WTC11 (cell line): ENCODE measurements at regions of chr2 and their contacts with region 1.

Region 1: GRCh38 chr2:149017116-149017985 is 21.1 kb upstream of the LYPD6B start:
- DNase-seq: peak; percentile 85
- ATAC-seq: peak; percentile 85
- H3K4me3 Mint-ChIP-seq: no peak overlapping the region
- H3K27ac Mint-ChIP-seq: peak overlapping the region; percentile 68; the same call in 1 of the 2 replicates
- H3K4me1 Mint-ChIP-seq: peaks cover 13% of the 10 kb centered on the region
- H3K27me3 Mint-ChIP-seq: no peaks in the 10 kb centered on the region
- CTCF ChIP-seq: peak; percentile 75

Region 2: GRCh38 chr2:149005471-149006092 is 11.8 kb before region 1 on chr2:
- CTCF ChIA-PET with region 1: interaction called, 11 read pairs
- POLR2A ChIA-PET with region 1: no interaction called
- DNase-seq: no peak
- ATAC-seq: no peak
- H3K4me3 Mint-ChIP-seq: no peak overlapping the region
- H3K27ac Mint-ChIP-seq: no peak overlapping the region
- H3K4me1 Mint-ChIP-seq: peaks cover 41% of the 10 kb centered on the region
- H3K27me3 Mint-ChIP-seq: no peaks in the 10 kb centered on the region
- CTCF ChIP-seq: no peak

Region 3: DNA sequence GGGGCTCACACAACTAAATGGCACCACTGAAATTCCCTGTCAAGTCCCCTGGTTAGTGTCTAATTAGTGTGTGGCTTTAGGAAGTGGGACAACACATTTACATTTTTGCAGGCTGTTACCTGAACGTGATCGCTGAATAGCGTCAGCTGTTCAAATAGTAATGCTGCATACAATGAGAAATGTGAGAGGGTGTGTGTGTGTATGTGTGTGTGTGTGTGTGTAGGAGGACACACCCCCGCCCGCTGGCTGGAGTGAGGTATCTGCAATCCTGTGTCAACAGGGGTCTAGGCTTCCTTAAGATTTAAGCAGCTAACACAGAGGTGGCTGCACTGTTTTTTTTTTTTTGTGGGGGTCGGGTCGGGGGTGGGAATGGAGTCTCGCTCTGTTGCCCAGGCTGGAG is 16.4 kb after region 1 on chr2:
- CTCF ChIA-PET with region 1: interaction called, 104 read pairs
- POLR2A ChIA-PET with region 1: no interaction called
- DNase-seq: no peak
- ATAC-seq: no peak
- H3K4me3 Mint-ChIP-seq: no peak overlapping the region
- H3K27ac Mint-ChIP-seq: no peak overlapping the region
- H3K4me1 Mint-ChIP-seq: peaks cover 28% of the 10 kb centered on the region
- H3K27me3 Mint-ChIP-seq: peaks cover 13% of the 10 kb centered on the region
- CTCF ChIP-seq: no peak

Region 4: DNA sequence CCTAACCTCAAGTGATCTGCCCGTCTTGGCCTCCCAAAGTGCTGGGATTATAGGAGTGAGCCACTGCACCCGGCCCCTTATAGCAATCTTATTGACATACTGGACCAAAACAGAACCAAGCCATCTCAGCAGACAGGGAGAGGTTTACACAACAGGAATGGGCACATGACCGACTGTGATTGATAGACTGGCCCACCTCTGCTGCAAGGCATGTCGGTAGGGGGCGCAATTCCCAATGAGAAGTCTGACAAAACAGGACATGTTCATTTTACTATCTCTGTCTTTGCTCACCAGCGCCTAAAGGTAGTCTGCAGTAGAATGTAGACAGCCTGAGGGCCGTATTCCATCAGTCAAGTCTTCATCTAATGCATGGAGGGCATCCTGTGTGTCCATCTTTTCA is 23.1 kb after region 1 on chr2:
- CTCF ChIA-PET with region 1: interaction called, 104 read pairs
- POLR2A ChIA-PET with region 1: no interaction called
- DNase-seq: peak; percentile 87
- ATAC-seq: peak; percentile 29
- H3K4me3 Mint-ChIP-seq: peak overlapping the region; percentile 45; the same call in 1 of the 2 replicates
- H3K27ac Mint-ChIP-seq: no peak overlapping the region
- H3K4me1 Mint-ChIP-seq: peaks cover 4% of the 10 kb centered on the region; the same call in 1 of the 2 replicates
- H3K27me3 Mint-ChIP-seq: peaks cover 30% of the 10 kb centered on the region
- CTCF ChIP-seq: peak; percentile 91

Region 5: DNA sequence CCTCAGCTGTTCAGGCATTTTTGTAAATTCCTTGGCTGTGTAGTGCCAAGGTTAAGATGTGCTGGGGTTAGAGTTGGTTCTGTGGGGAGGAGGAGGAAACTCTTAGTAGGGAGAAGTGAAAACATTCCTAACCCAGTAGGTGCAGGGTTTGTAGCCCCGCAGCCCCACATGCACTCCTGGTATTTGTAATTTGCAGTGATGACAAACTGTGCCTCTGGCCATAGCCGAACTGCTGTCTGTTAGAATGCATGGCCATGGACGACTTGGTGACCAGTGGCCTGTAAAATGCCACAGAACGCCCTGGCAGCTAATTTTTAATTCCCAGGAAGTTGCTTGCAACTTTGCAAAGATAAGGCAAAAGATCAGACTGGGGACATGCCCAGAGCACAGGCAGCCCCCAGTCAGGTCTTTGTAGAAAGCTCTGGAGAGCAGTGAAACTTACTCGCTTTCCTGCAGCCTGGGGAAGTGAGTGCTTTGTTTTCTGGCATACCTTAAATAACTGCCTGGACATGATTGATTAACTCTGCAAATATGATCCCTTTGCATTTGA is 59.6 kb after region 1 on chr2:
- CTCF ChIA-PET with region 1: interaction called, 10 read pairs
- POLR2A ChIA-PET with region 1: no interaction called
- DNase-seq: peak; percentile 33
- ATAC-seq: peak; percentile 78
- H3K4me3 Mint-ChIP-seq: peak overlapping the region; percentile 32
- H3K27ac Mint-ChIP-seq: peak overlapping the region; percentile 95
- H3K4me1 Mint-ChIP-seq: peaks cover 60% of the 10 kb centered on the region
- H3K27me3 Mint-ChIP-seq: peaks cover 19% of the 10 kb centered on the region
- CTCF ChIP-seq: no peak

Region 6: GRCh38 chr2:149313512-149313972 is 296.2 kb after region 1 on chr2:
- CTCF ChIA-PET with region 1: interaction called, 20 read pairs
- POLR2A ChIA-PET with region 1: no interaction called
- DNase-seq: peak; percentile 48
- ATAC-seq: peak; percentile 89
- H3K4me3 Mint-ChIP-seq: 0 out of 2 replicates have a peak overlapping the region, but pooled peaks have one; percentile 2
- H3K27ac Mint-ChIP-seq: no peak overlapping the region
- H3K4me1 Mint-ChIP-seq: peaks cover 34% of the 10 kb centered on the region
- H3K27me3 Mint-ChIP-seq: no peaks in the 10 kb centered on the region; the same call in 1 of the 2 replicates
- CTCF ChIP-seq: peak; percentile 77

Region 7: DNA sequence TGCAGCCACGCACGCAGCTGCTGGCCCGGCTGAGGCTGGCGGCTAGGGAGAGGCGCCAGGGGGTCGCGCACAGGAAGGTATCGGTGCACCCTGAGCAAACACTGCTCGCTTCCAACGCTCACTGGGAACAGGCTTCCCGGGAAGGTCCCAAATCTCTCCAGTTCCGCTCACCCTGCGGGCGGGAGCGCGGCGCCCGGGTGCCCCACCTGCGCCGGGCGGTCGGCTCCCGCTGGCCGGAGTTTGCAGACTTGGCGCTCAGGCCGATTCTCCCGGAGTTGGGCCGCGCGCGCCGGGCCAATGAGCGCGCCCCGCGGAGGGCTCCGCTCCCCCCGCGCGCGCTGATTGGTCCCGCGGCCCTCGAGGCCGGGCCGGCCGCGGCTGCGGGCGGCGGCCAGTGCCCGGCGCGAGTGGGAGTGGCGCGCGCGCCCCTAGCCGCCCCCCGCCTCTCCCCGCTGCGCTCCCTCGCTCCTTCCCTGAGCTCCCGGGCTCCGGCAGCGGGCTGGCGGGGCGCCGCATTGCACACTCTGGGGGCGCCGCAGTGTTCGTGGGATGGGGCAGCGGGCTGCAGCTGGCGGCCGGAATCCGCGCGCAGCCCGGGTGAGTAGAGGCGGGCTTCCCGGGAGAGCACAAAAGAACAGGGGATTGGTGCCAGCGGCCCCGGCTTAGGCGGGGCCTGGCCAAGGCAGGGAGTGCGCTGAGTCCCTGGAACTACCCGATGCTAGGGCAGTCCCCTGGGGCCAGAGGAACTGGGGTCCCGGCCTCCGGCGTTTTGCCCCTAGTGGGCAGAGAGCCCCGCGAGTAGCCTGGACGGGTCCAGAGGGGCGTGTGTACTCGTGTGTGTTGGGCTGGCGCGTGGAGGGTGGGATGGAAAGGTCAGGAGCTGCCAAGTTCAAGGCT is 313.0 kb after region 1 on chr2 and contains the start of gene LYPD6:
- CTCF ChIA-PET with region 1: interaction called, 11 read pairs
- POLR2A ChIA-PET with region 1: no interaction called
- DNase-seq: peak; percentile 71
- ATAC-seq: peak; percentile 83
- H3K4me3 Mint-ChIP-seq: peak within 1 kb of the TSS; percentile 80
- H3K27ac Mint-ChIP-seq: no peak within 1 kb of the TSS; the same call in 1 of the 2 replicates
- H3K4me1 Mint-ChIP-seq: peaks cover 27% of the 10 kb centered on the region
- H3K27me3 Mint-ChIP-seq: peaks cover 20% of the 10 kb centered on the region
- CTCF ChIP-seq: no peak
- total RNA-seq, gene LYPD6: 4.8 to 5.1 TPM (median 5.0 TPM) in 3 replicates